ENCODE measurements at regions of chr16 and their contacts with region 1.

Region 1: GRCh38 chr16:53537626-53538025 is 34.6 kb upstream of the AKTIP start:
- DNase-seq: peak in 1 of 2 donors; percentile 50
- ATAC-seq: peak; percentile 47 to 57 (median 48)
- H3K4me3 ChIP-seq: no peak overlapping the region
- H3K4me3 Mint-ChIP-seq: peak overlapping the region; percentile 33
- H3K27ac ChIP-seq: no peak overlapping the region
- H3K27ac Mint-ChIP-seq: peak overlapping the region; percentile 76
- H3K4me1 ChIP-seq: peaks cover 12% of the 10 kb centered on the region
- H3K4me1 Mint-ChIP-seq: peaks cover 35 to 38% of the 10 kb centered on the region in 2 donors
- H3K27me3 ChIP-seq: no peaks in the 10 kb centered on the region
- H3K27me3 Mint-ChIP-seq: peaks cover 0 to 6% of the 10 kb centered on the region in 2 donors
- CTCF ChIP-seq: no peak

Region 2: DNA sequence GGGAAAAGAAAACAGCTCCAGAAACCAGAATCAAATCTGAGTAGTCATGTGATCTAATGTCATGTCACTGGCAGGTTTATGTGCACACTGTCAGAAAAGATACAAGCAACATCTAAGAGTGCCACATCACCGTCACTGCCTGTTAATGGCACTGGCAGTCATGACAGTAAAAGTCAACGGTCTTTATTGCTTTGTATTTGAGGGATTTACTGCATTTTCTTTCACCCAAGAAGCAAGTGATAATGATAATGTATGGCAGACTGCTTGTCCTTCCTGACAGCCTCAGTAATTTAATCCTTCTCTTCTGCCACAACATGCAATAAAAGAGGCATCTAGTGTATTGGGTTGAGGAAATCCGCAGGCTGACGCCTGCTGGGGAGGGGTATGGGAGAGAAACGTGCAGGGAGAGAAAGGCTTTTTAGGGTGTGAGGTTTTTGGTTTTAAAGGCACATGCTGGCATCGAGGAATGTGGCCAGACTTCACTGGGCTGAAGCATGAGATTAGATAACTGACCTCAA is 73.6 kb after region 1 on chr16:
- intact Hi-C with region 1: no loop called
- DNase-seq: no peak
- ATAC-seq: no peak
- H3K4me3 ChIP-seq: no peak overlapping the region
- H3K4me3 Mint-ChIP-seq: no peak overlapping the region
- H3K27ac ChIP-seq: no peak overlapping the region
- H3K27ac Mint-ChIP-seq: no peak overlapping the region
- H3K4me1 ChIP-seq: no peaks in the 10 kb centered on the region
- H3K4me1 Mint-ChIP-seq: no peaks in the 10 kb centered on the region
- H3K27me3 ChIP-seq: no peaks in the 10 kb centered on the region
- H3K27me3 Mint-ChIP-seq: no peaks in the 10 kb centered on the region
- CTCF ChIP-seq: no peak

Region 3: DNA sequence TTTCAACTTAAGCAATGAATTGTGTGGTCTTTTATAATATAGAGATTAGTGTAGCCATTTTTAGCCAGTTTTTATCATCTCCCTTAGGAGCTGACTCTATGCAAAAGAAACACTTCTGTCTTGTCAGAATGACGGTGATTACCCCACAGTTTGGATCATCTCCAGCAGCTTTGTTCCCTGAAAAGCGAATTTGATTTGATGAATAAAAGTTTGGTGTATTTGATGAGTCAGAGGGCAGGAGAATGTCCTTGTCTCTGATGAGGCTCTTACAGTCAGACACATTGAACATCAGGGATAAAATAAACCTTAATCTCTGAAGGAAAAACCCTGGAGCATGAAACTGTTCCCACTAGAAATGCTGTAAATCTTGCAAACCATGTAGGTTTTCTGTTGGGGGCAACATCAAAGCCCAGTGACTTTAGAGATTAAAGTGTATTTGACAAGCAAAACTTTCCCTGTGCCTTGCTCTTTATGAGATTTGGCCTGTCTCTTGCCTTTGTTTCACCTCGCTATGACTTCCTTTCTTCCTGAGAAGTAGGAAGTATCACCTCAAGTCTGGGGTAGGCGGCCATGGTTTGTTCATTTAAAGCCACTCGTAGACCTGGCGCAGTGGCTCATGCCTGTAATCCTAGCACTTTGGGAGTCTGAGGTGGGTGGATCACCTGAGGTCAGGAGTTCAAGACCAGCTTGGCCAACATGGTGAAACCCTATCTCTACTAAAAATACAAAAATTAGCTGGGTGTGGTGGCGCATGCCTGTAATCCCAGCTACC is 375.7 kb after region 1 on chr16:
- intact Hi-C with region 1: loop called (anchors 2 kb)
- DNase-seq: peak; percentile 21 to 25
- ATAC-seq: peak in 2 of 3 donors; percentile 16 to 24
- H3K4me3 ChIP-seq: no peak overlapping the region
- H3K4me3 Mint-ChIP-seq: peak overlapping the region; percentile 75
- H3K27ac ChIP-seq: peak overlapping the region; percentile 71
- H3K27ac Mint-ChIP-seq: no peak overlapping the region
- H3K4me1 ChIP-seq: peaks cover 30% of the 10 kb centered on the region
- H3K4me1 Mint-ChIP-seq: peaks cover 0 to 19% of the 10 kb centered on the region in 2 donors
- H3K27me3 ChIP-seq: no peaks in the 10 kb centered on the region
- H3K27me3 Mint-ChIP-seq: no peaks in the 10 kb centered on the region
- CTCF ChIP-seq: no peak

Region 4: GRCh38 chr16:54331241-54332002 is 793.8 kb after region 1 on chr16:
- intact Hi-C with region 1: no loop called
- DNase-seq: no peak
- ATAC-seq: no peak
- H3K4me3 ChIP-seq: no peak overlapping the region
- H3K4me3 Mint-ChIP-seq: no peak overlapping the region
- H3K27ac ChIP-seq: no peak overlapping the region
- H3K27ac Mint-ChIP-seq: no peak overlapping the region
- H3K4me1 ChIP-seq: no peaks in the 10 kb centered on the region
- H3K4me1 Mint-ChIP-seq: no peaks in the 10 kb centered on the region
- H3K27me3 ChIP-seq: peaks cover 2% of the 10 kb centered on the region
- H3K27me3 Mint-ChIP-seq: peaks cover 2 to 45% of the 10 kb centered on the region in 2 donors
- CTCF ChIP-seq: no peak

Measured in natural killer cell (primary cell).